A549 (cell line): ENCODE measurements at regions of chrX and their contacts with region 1.

Region 1: DNA sequence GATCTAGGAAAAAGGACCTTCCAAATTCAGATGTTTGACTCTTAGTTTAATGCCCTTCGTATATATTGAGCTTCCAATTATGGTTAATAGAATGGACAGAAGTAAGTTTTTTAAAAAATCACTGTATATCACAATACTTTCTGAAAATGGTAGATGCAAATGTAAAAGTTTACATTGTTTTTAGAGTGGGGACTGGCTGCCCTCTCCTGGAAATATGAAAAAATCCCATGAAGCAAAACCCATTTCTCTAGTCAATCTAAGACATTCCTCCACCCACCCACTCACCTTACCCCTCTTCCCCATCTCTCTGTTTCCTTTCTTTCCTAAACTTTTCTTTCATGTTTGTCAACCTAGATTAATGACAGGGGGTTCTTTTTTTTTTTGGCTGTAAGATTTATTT is 134.5 kb downstream of the ARHGAP6 start:
- DNase-seq: peak in 1 of 2 experiments; percentile 1
- ATAC-seq: no peak
- H3K4me3 ChIP-seq: no peak overlapping the region
- H3K27ac ChIP-seq: no peak overlapping the region
- H3K4me1 ChIP-seq: no peaks in the 10 kb centered on the region
- CTCF ChIP-seq: peak; percentile 34; the same call in 1 of the 3 replicates
- EP300 ChIP-seq: no peak
- POLR2A ChIP-seq: no peak
- RAD21 ChIP-seq: peak; percentile 26 to 46; a peak in 3 of 5 replicates

Region 2: DNA sequence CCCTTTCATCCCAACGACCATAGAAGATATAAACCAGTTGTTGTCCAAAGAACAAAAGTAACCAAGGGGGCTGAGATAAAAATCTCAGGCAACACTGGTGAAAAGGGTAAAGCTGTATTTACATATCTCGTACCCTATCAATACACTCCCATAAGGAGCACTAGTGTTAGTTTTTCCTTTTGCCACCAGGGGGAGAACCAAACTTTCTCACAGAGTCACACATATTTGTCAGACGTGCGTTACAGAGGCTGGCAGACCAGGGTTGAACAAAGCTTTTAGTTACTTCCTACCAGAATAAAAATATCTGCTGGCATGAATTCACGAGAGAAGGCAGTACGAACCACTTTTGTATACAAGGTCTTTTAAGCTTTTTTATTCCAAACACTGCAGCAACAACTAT is 149.8 kb before region 1 on chrX:
- CTCF ChIA-PET with region 1: interaction called, 14 read pairs
- POLR2A ChIA-PET with region 1: no interaction called
- DNase-seq: peak; percentile 5 to 46
- ATAC-seq: peak; percentile 76 to 89; a peak in 5 of 6 replicates
- H3K4me3 ChIP-seq: no peak overlapping the region
- H3K27ac ChIP-seq: no peak overlapping the region
- H3K4me1 ChIP-seq: no peaks in the 10 kb centered on the region
- CTCF ChIP-seq: peak; percentile 28
- EP300 ChIP-seq: no peak
- POLR2A ChIP-seq: no peak
- RAD21 ChIP-seq: peak; percentile 15 to 20; a peak in 1 of 5 replicates

Region 3: GRCh38 chrX:11406109-11406765 is 125.0 kb before region 1 on chrX:
- CTCF ChIA-PET with region 1: no interaction called
- POLR2A ChIA-PET with region 1: no interaction called
- DNase-seq: no peak
- ATAC-seq: no peak
- H3K4me3 ChIP-seq: no peak overlapping the region
- H3K27ac ChIP-seq: no peak overlapping the region
- H3K4me1 ChIP-seq: no peaks in the 10 kb centered on the region
- CTCF ChIP-seq: no peak
- EP300 ChIP-seq: no peak
- POLR2A ChIP-seq: no peak
- RAD21 ChIP-seq: no peak

Region 4: GRCh38 chrX:11629593-11630211 is 98.5 kb after region 1 on chrX:
- CTCF ChIA-PET with region 1: no interaction called
- POLR2A ChIA-PET with region 1: no interaction called
- DNase-seq: no peak
- ATAC-seq: no peak
- H3K4me3 ChIP-seq: no peak overlapping the region
- H3K27ac ChIP-seq: no peak overlapping the region
- H3K4me1 ChIP-seq: no peaks in the 10 kb centered on the region
- CTCF ChIP-seq: no peak
- EP300 ChIP-seq: no peak
- POLR2A ChIP-seq: no peak
- RAD21 ChIP-seq: no peak